Activated T-helper 1 cell treated with anti-CD3 and anti-CD28 coated beads, Interleukin-12 subunit alpha, Interleukin-12 subunit beta, Interleukin-2, Interleukin-4 antibody, amounts not matched to agents 30 ng/mL and 10 ng/mL and 1 ng/mL, durations not matched to agents 14 hours and 24 hours and 36 hours (primary cell): ENCODE measurements at regions of chr2 and their contacts with region 1.

Region 1: DNA sequence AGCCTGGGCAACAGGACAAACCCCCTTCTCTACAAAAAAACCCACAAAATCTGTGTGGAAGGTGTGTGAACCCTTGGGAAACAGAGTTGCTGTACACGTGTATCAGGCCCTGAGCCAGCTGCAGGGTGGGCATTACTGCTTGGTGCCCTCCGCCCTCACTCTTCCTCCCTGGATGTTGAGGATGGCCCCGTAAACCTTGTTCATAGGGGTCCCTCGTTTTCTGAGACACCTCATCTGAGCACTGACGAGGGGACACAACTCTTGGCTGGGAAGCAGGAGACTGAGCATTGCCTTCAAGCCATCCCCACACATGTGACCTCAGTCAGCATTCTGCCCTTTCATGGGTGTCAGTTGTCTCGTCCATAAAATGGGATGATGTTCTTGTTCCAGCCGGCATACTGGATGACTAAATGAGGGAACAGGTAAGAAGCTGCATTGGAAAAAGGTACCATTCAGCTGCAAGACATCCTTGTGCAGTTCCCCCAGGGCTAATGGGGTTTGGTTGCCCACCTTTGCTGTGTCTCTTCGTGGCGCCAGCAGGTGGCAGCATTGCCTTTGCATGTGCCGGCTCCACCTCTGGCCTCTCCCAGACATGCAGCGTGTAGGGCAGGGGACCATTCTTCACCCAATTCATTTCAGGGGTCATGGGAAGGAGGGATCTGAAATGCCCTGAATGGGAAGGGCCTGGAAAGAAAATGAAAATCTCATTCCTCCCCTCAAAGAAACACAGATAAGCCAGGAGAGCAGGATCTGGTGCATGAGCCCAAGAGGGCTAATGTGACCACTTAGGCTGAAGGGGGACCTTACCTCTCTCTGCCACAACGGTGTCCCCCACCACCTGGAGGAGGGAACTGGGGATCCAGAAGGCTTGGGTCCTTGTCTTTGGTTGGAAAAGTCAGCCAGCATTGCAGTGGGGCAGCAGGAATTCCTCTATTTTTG is 36.4 kb upstream of the HAAO start:
- DNase-seq: peak; percentile 52
- H3K4me3 Mint-ChIP-seq: no peak overlapping the region
- H3K27ac Mint-ChIP-seq: no peak overlapping the region
- H3K4me1 Mint-ChIP-seq: peaks cover 16% of the 10 kb centered on the region
- H3K27me3 Mint-ChIP-seq: peaks cover 14% of the 10 kb centered on the region

Region 2: DNA sequence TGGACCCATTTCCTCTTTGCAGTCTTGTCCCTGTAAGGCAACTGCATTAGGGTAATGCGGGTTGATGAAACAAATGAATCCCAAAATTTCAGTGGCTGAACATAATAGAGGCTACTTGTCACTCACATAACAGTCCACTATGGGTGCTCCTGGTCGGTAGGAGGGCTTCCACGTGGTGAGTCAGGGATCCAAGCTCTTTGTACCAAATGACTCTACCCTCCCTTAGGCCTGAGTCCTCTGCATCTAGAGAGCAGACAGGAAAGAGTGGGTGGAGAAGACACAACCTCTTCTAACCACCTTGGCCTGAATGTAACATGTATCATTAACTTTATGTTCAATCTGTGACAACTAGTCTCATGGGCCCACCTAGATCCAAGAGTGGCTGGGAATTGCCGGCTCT is 49.8 kb after region 1 on chr2:
- intact Hi-C with region 1: no loop called
- DNase-seq: no peak
- H3K4me3 Mint-ChIP-seq: no peak overlapping the region
- H3K27ac Mint-ChIP-seq: no peak overlapping the region
- H3K4me1 Mint-ChIP-seq: peaks cover 26% of the 10 kb centered on the region
- H3K27me3 Mint-ChIP-seq: no peaks in the 10 kb centered on the region

Region 3: GRCh38 chr2:43542285-43542937 is 713.7 kb after region 1 on chr2:
- intact Hi-C with region 1: loop called (anchors 1 kb)
- DNase-seq: no peak
- H3K4me3 Mint-ChIP-seq: no peak overlapping the region
- H3K27ac Mint-ChIP-seq: no peak overlapping the region
- H3K4me1 Mint-ChIP-seq: peaks cover 18% of the 10 kb centered on the region
- H3K27me3 Mint-ChIP-seq: no peaks in the 10 kb centered on the region

Region 4: GRCh38 chr2:43611987-43612894 is 783.5 kb after region 1 on chr2:
- intact Hi-C with region 1: loop called (anchors 1 kb)
- DNase-seq: peak; percentile 60
- H3K4me3 Mint-ChIP-seq: no peak overlapping the region
- H3K27ac Mint-ChIP-seq: no peak overlapping the region
- H3K4me1 Mint-ChIP-seq: peaks cover 5% of the 10 kb centered on the region
- H3K27me3 Mint-ChIP-seq: peaks cover 9% of the 10 kb centered on the region